ENCODE measurements at regions of chr9 and their contacts with region 1.

Region 1: DNA sequence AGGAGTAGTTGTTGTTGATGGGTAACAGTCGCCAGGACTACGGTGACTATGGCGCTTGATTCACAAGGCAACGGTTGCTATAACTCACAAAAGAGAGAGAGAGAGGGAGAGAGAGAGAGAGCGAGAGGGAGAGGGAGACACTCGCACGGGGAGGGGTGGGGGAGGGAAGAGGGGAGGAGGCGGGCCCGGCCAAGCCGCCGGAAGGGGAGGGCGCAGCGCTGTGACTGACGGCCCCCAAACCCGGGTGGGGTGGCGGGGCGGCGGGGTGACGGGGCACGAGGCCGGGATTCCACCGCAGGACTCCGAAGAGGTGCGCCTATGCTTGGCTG is at the start of gene RFX3:
- DNase-seq: peak in 8 of 9 donors; percentile 87 to 97 (median 92)
- ATAC-seq: peak; percentile 81
- H3K4me3 ChIP-seq: peak within 1 kb of the TSS; percentile 97
- H3K4me3 Mint-ChIP-seq: peak within 1 kb of the TSS; percentile 90 to 99 (median 94)
- H3K27ac ChIP-seq: peak within 1 kb of the TSS; percentile 100
- H3K27ac Mint-ChIP-seq: peak within 1 kb of the TSS; percentile 95 to 100 (median 99)
- H3K4me1 ChIP-seq: peaks cover 28 to 44% of the 10 kb centered on the region in 2 donors
- H3K4me1 Mint-ChIP-seq: peaks cover 32 to 74% (median 67%) of the 10 kb centered on the region in 7 donors
- H3K27me3 ChIP-seq: no peaks in the 10 kb centered on the region
- H3K27me3 Mint-ChIP-seq: peaks cover 0 to 5% (median 0%) of the 10 kb centered on the region in 5 donors
- total RNA-seq, gene RFX3: 12.8 to 31.7 (median 28.4) TPM

Region 2: GRCh38 chr9:3181049-3181953 is 344.5 kb before region 1 on chr9:
- CTCF ChIA-PET with region 1: no interaction called
- POLR2A ChIA-PET with region 1: no interaction called
- intact Hi-C with region 1: no loop called
- DNase-seq: peak; percentile 4 to 50 (median 18)
- ATAC-seq: peak; percentile 51
- H3K4me3 ChIP-seq: no peak overlapping the region
- H3K4me3 Mint-ChIP-seq: peak overlapping the region; percentile 14 to 73 (median 45)
- H3K27ac ChIP-seq: no peak overlapping the region
- H3K27ac Mint-ChIP-seq: no peak overlapping the region
- H3K4me1 ChIP-seq: no peaks in the 10 kb centered on the region
- H3K4me1 Mint-ChIP-seq: peaks cover 0 to 18% (median 2%) of the 10 kb centered on the region in 7 donors
- H3K27me3 ChIP-seq: no peaks in the 10 kb centered on the region
- H3K27me3 Mint-ChIP-seq: peaks cover 36 to 51% (median 50%) of the 10 kb centered on the region in 5 donors

Region 3: GRCh38 chr9:3385871-3386270 is 139.9 kb before region 1 on chr9:
- CTCF ChIA-PET with region 1: no interaction called
- POLR2A ChIA-PET with region 1: no interaction called
- intact Hi-C with region 1: loop called in 1 of 2 experiments (anchors 5 kb)
- DNase-seq: peak in 1 of 9 donors; percentile 23
- ATAC-seq: no peak
- H3K4me3 ChIP-seq: no peak overlapping the region
- H3K4me3 Mint-ChIP-seq: peak overlapping the region in 4 of 10 donors; percentile 10 to 39 (median 27)
- H3K27ac ChIP-seq: no peak overlapping the region
- H3K27ac Mint-ChIP-seq: no peak overlapping the region
- H3K4me1 ChIP-seq: peaks cover 0 to 4% of the 10 kb centered on the region in 2 donors
- H3K4me1 Mint-ChIP-seq: peaks cover 13 to 38% (median 27%) of the 10 kb centered on the region in 7 donors
- H3K27me3 ChIP-seq: no peaks in the 10 kb centered on the region
- H3K27me3 Mint-ChIP-seq: no peaks in the 10 kb centered on the region

Region 4: DNA sequence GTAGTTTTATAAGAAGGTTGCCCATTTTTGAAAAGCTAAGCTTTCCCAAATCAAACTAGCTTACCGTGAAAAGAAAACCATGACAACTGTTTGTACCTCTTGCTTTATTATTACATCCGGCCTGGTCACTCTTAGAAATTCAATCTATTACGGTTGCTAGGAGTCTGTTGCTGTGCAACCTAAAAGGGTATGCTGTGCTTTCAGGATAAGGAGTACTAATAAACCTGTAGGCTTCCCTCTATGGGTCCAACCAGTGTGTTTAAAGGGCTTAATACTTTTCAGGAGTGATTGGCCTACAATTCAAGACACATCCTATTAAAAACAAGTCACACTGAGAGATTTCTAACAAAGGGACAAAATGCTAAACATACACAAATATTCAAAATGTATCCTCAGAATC is 27.1 kb before region 1 on chr9:
- CTCF ChIA-PET with region 1: interaction called, 3 read pairs
- POLR2A ChIA-PET with region 1: interaction called, 21 read pairs
- intact Hi-C with region 1: no loop called
- DNase-seq: no peak
- ATAC-seq: no peak
- H3K4me3 ChIP-seq: no peak overlapping the region
- H3K4me3 Mint-ChIP-seq: no peak overlapping the region
- H3K27ac ChIP-seq: no peak overlapping the region
- H3K27ac Mint-ChIP-seq: no peak overlapping the region
- H3K4me1 ChIP-seq: no peaks in the 10 kb centered on the region
- H3K4me1 Mint-ChIP-seq: peaks cover 4 to 44% (median 25%) of the 10 kb centered on the region in 7 donors
- H3K27me3 ChIP-seq: no peaks in the 10 kb centered on the region
- H3K27me3 Mint-ChIP-seq: no peaks in the 10 kb centered on the region

Region 5: DNA sequence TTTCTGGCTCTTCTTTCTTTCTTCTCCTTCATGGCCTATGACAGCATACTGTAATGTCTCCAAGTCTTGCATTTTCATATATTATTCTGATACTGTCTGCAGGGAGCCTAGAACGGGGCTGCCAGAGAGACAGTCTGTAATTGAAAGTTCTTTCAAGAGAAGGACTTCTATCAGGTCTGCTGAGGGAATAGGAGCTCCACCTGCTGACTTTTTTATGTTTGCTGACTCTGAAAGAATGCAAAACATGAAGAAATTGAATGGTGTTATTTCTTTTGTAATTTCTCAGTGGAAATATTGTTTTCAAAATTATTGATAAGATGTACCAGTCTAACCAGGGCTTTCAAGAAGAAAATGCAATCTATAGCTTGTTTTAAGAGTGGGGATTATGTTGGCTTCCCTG is 121.9 kb after region 1 on chr9:
- CTCF ChIA-PET with region 1: no interaction called
- POLR2A ChIA-PET with region 1: no interaction called
- intact Hi-C with region 1: loop called in 1 of 2 experiments (anchors 2 kb)
- DNase-seq: peak in 4 of 9 donors; percentile 1 to 18 (median 3)
- ATAC-seq: no peak
- H3K4me3 ChIP-seq: no peak overlapping the region
- H3K4me3 Mint-ChIP-seq: no peak overlapping the region
- H3K27ac ChIP-seq: no peak overlapping the region
- H3K27ac Mint-ChIP-seq: no peak overlapping the region
- H3K4me1 ChIP-seq: no peaks in the 10 kb centered on the region
- H3K4me1 Mint-ChIP-seq: no peaks in the 10 kb centered on the region
- H3K27me3 ChIP-seq: no peaks in the 10 kb centered on the region
- H3K27me3 Mint-ChIP-seq: no peaks in the 10 kb centered on the region

Region 6: DNA sequence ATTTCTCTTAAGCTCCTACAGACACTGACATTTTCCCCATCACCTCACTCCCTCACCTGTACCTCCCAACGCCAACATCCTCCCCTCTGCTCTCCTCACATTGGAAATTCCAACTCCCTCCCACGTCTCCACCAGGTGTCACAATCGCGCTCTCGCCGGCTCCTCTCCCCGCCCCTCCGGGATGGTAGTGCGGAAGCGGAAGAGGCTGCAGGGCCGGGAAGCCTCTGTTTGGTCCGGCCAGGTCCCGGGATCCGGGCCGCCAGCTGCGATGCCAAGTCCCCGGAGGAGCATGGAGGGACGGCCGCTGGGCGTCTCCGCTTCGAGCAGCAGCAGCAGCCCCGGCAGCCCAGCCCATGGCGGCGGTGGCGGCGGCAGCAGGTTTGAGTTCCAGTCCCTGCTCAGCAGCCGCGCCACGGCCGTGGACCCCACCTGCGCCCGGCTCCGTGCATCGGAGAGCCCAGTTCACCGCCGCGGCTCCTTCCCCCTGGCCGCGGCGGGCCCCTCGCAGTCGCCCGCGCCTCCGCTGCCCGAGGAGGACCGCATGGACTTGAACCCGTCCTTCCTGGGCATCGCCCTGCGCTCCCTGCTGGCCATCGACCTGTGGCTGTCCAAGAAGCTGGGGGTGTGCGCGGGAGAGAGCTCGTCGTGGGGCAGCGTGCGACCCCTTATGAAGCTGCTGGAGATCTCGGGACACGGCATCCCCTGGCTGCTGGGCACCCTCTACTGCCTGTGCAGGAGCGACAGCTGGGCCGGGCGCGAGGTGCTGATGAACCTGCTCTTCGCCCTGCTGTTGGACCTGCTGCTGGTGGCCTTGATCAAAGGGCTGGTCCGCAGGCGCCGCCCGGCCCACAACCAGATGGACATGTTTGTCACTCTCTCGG is 1136.5 kb after region 1 on chr9 and contains the start of gene PLPP6:
- CTCF ChIA-PET with region 1: interaction called, 3 read pairs
- POLR2A ChIA-PET with region 1: interaction called, 8 read pairs
- intact Hi-C with region 1: loop called (anchors 5 kb)
- DNase-seq: peak; percentile 55 to 81 (median 76)
- ATAC-seq: peak; percentile 86
- H3K4me3 ChIP-seq: peak within 1 kb of the TSS; percentile 63
- H3K4me3 Mint-ChIP-seq: peak within 1 kb of the TSS; percentile 89 to 98 (median 96)
- H3K27ac ChIP-seq: peak within 1 kb of the TSS; percentile 78
- H3K27ac Mint-ChIP-seq: peak within 1 kb of the TSS; percentile 85 to 98 (median 95)
- H3K4me1 ChIP-seq: peaks cover 21 to 50% of the 10 kb centered on the region in 2 donors
- H3K4me1 Mint-ChIP-seq: peaks cover 41 to 80% (median 64%) of the 10 kb centered on the region in 7 donors
- H3K27me3 ChIP-seq: no peaks in the 10 kb centered on the region
- H3K27me3 Mint-ChIP-seq: peaks cover 0 to 12% (median 0%) of the 10 kb centered on the region in 5 donors
- total RNA-seq, gene PLPP6: 7.4 to 24.1 (median 10.2) TPM

Region 7: DNA sequence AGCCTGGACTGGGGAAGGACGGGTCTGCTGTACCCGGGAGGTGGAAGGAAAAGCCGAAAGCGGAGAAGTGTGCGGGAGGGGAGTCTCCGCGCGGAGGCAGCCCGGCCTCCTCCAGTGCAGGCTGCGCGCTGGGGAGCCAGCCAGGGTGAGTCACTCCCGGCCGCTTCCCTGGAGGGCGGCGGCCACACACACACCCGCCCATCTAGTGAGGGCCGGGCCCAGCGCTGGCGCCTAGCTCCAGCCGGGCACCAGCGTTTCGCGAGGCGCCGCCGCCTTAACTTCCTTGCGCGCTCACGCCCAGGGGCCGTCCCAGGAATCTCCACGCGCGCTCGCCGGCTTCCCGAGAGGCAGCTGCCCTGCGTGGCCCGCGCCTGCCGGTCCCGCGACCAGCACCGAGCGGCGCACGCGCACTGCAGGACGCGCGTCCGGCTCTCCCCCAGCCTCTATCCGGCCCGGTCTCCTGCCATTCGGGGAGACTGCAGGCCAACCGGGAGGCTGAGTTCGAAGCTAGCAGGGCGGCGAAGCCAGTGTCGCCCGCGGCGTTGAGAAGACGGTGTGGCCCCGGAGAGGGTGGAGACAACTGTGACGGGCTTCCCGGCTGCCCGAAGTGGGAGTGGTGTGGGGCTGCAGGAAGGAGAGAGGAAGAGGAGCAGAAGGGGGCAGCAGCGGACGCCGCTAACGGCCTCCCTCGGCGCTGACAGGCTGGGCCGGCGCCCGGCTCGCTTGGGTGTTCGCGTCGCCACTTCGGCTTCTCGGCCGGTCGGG is 1459.0 kb after region 1 on chr9 and contains the start of gene JAK2:
- CTCF ChIA-PET with region 1: no interaction called
- POLR2A ChIA-PET with region 1: interaction called, 5 read pairs
- intact Hi-C with region 1: loop called (anchors 1 to 2 kb)
- DNase-seq: peak; percentile 62 to 85 (median 72)
- ATAC-seq: peak; percentile 87
- H3K4me3 ChIP-seq: peak within 1 kb of the TSS; percentile 52
- H3K4me3 Mint-ChIP-seq: peak within 1 kb of the TSS; percentile 83 to 98 (median 94)
- H3K27ac ChIP-seq: peak within 1 kb of the TSS; percentile 78
- H3K27ac Mint-ChIP-seq: peak within 1 kb of the TSS; percentile 80 to 94 (median 90)
- H3K4me1 ChIP-seq: peaks cover 20 to 32% of the 10 kb centered on the region in 2 donors
- H3K4me1 Mint-ChIP-seq: peaks cover 20 to 41% (median 26%) of the 10 kb centered on the region in 7 donors
- H3K27me3 ChIP-seq: no peaks in the 10 kb centered on the region
- H3K27me3 Mint-ChIP-seq: no peaks in the 10 kb centered on the region
- total RNA-seq, gene JAK2: 11.7 to 76.0 (median 17.5) TPM

Measured in naive thymus-derived CD4-positive, alpha-beta T cell (primary cell).